CD8-positive, alpha-beta memory T cell (primary cell): ENCODE measurements at regions of chr7 and their contacts with region 1.

Region 1: GRCh38 chr7:73606801-73607691 is 17.3 kb downstream of the MLXIPL start:
- DNase-seq: peak; percentile 55 to 78 (median 65)
- H3K4me3 ChIP-seq: no peak overlapping the region
- H3K4me3 Mint-ChIP-seq: no peak overlapping the region
- H3K27ac ChIP-seq: no peak overlapping the region
- H3K27ac Mint-ChIP-seq: peak overlapping the region in 1 of 8 donors; percentile 38
- H3K4me1 ChIP-seq: no peaks in the 10 kb centered on the region
- H3K4me1 Mint-ChIP-seq: no peaks in the 10 kb centered on the region
- H3K27me3 ChIP-seq: peaks cover 8% of the 10 kb centered on the region
- H3K27me3 Mint-ChIP-seq: peaks cover 11 to 31% of the 10 kb centered on the region in 2 donors

Region 2: GRCh38 chr7:73585196-73585595 is 21.9 kb before region 1 on chr7:
- CTCF ChIA-PET with region 1: interaction called, 12 read pairs
- POLR2A ChIA-PET with region 1: no interaction called
- DNase-seq: no peak
- H3K4me3 ChIP-seq: no peak overlapping the region
- H3K4me3 Mint-ChIP-seq: no peak overlapping the region
- H3K27ac ChIP-seq: no peak overlapping the region
- H3K27ac Mint-ChIP-seq: no peak overlapping the region
- H3K4me1 ChIP-seq: no peaks in the 10 kb centered on the region
- H3K4me1 Mint-ChIP-seq: peaks cover 4 to 5% (median 5%) of the 10 kb centered on the region in 3 donors
- H3K27me3 ChIP-seq: no peaks in the 10 kb centered on the region
- H3K27me3 Mint-ChIP-seq: peaks cover 0 to 2% of the 10 kb centered on the region in 2 donors

Region 3: DNA sequence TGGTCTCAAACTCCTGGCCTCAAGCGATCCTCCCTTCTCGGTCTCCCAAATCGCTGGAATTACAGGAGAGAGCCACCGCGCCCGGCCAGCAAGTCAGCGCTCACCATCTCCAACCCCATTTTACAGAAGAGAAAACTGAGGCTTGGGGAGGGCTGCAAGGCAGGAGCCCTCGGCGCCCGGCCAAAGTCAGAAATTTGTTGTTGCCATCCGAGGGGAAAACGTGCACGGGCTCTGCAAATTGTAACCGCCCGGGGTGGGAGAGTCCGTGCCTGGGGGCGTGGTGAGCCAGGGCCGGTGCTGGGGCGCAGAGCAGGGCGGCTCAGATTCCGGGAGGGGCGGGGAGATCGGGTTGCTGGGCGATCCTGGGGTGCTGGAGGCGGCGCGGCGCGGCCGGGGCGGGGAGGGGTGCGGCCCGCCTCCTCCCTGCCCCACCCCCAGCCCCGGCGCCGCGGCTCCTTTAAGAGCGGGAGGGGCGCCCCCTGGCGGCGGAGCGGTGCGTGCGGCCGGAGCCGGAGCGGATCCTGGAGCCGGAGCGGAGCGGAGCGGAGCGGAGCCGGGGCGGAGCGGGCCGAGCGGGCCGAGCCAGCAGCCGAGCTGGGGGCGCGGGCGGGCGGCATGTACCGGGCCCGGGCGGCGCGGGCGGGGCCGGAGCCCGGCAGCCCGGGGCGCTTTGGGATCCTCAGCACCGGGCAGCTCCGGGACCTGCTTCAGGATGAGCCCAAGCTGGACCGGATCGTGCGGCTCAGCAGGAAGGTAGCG is 60.5 kb after region 1 on chr7 and contains the start of gene VPS37D:
- CTCF ChIA-PET with region 1: interaction called, 11 read pairs
- POLR2A ChIA-PET with region 1: no interaction called
- DNase-seq: peak; percentile 88 to 95 (median 91)
- H3K4me3 ChIP-seq: peak within 1 kb of the TSS; percentile 34
- H3K4me3 Mint-ChIP-seq: peak within 1 kb of the TSS; percentile 70 to 87 (median 78)
- H3K27ac ChIP-seq: peak within 1 kb of the TSS; percentile 18
- H3K27ac Mint-ChIP-seq: peak within 1 kb of the TSS in 6 of 8 donors; percentile 13 to 76 (median 47)
- H3K4me1 ChIP-seq: peaks cover 7% of the 10 kb centered on the region
- H3K4me1 Mint-ChIP-seq: peaks cover 6 to 12% (median 7%) of the 10 kb centered on the region in 3 donors
- H3K27me3 ChIP-seq: peaks cover 4% of the 10 kb centered on the region
- H3K27me3 Mint-ChIP-seq: peaks cover 18 to 30% of the 10 kb centered on the region in 2 donors
- total RNA-seq, gene VPS37D: 0.18 TPM in 1 of 2 experiments, not detected in the other

Region 4: DNA sequence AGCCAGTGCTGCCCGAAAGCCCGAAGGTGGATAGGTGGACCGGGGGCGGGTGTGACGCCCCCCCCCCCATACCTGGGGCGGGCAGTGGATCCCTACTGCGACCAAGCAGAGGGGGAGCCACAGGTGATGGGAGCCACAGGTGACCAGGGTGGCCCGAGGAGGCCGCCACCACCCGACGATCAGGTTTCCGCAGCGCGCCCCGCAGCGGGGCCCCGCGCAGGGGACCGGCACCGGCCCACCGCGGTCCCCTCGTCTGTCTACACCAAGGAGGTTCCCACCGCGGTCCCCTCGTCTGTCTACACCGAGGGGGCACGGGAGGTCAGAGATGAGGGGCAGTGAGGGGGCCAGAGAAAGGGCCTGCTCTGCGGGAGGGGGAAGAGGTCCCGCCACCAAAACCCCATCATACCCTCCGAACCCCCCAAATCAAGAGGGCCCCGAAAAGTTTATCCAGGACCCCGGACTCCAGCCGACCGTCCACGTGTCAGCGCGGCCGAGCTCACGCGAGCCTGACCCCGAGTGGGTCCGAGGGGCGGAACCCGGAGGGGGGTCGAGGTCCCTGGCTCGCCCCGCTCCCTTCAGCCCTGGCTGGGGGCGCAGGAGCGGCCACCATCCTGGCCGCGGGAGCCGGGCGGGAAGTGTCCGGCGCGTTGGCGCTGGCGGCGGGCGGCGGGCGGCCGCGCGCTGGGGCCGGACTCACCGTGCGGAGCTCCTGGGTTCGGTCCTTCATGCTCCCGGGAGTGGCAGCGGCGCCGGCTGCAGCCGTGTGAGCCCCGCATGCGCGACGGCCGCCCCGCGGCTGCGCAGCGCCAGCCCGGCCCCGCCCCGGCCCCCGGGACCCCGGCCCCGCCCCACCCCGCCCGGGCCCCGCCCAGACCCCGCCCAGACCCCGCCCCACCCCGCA is 112.1 kb after region 1 on chr7 and contains the start of gene STX1A:
- CTCF ChIA-PET with region 1: interaction called, 81 read pairs
- POLR2A ChIA-PET with region 1: interaction called, 4 read pairs
- DNase-seq: peak; percentile 64 to 75 (median 70)
- H3K4me3 ChIP-seq: peak within 1 kb of the TSS; percentile 66
- H3K4me3 Mint-ChIP-seq: peak within 1 kb of the TSS; percentile 80 to 92 (median 85)
- H3K27ac ChIP-seq: peak within 1 kb of the TSS; percentile 31
- H3K27ac Mint-ChIP-seq: peak within 1 kb of the TSS in 5 of 8 donors; percentile 43 to 97 (median 54)
- H3K4me1 ChIP-seq: peaks cover 18% of the 10 kb centered on the region
- H3K4me1 Mint-ChIP-seq: peaks cover 15 to 30% (median 18%) of the 10 kb centered on the region in 3 donors
- H3K27me3 ChIP-seq: no peaks in the 10 kb centered on the region
- H3K27me3 Mint-ChIP-seq: peaks cover 0 to 3% of the 10 kb centered on the region in 2 donors
- total RNA-seq, gene STX1A: 18.4 to 18.8 TPM

Region 5: GRCh38 chr7:73726083-73726466 is 119.0 kb after region 1 on chr7:
- CTCF ChIA-PET with region 1: interaction called, 81 read pairs
- POLR2A ChIA-PET with region 1: no interaction called
- DNase-seq: no peak
- H3K4me3 ChIP-seq: no peak overlapping the region
- H3K4me3 Mint-ChIP-seq: no peak overlapping the region
- H3K27ac ChIP-seq: no peak overlapping the region
- H3K27ac Mint-ChIP-seq: no peak overlapping the region
- H3K4me1 ChIP-seq: no peaks in the 10 kb centered on the region
- H3K4me1 Mint-ChIP-seq: no peaks in the 10 kb centered on the region
- H3K27me3 ChIP-seq: peaks cover 6% of the 10 kb centered on the region
- H3K27me3 Mint-ChIP-seq: peaks cover 4 to 12% of the 10 kb centered on the region in 2 donors

Region 6: DNA sequence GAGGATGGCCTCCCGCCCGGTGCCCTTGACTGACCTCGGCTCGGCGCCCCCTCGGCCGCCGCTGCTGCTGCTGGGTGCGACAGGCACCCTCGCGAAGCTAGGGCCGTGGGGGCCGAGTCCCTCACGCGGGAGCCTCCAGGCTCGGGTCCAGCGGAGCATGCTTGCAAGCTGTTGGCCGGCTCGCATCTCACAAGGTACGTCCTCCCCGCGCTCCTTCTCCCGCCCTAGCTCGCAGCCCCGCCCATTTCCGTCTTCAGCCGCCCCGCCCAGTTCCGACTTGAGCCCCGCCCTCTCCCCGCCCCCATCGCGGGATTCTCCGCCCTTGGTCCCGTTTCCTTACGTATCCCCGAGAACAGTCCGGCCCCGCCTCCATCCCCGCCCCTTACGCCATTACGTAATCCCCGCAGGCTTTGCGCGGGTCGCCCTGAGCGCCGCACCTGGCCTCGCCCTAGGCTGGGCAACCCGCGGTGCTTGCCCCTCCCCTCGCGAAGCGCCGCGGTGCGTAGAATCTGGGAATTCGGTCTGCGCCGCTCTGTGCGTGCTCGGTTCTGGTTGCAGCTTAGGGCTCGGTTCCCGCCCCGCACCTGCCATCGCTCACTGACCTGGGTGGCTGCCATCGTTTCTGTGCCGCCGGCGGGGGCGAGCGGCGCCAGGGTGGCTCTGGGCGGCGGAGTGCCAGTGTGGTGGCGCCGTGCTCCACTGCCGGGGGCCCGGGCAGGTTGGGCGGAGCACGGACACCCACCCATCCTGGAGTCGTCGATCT is 131.7 kb after region 1 on chr7 and contains the start of gene ABHD11:
- CTCF ChIA-PET with region 1: interaction called, 104 read pairs
- POLR2A ChIA-PET with region 1: no interaction called
- DNase-seq: peak; percentile 97 to 98 (median 97)
- H3K4me3 ChIP-seq: peak within 1 kb of the TSS; percentile 83
- H3K4me3 Mint-ChIP-seq: peak within 1 kb of the TSS; percentile 87 to 97 (median 92)
- H3K27ac ChIP-seq: peak within 1 kb of the TSS; percentile 87
- H3K27ac Mint-ChIP-seq: peak within 1 kb of the TSS; percentile 82 to 97 (median 92)
- H3K4me1 ChIP-seq: peaks cover 9% of the 10 kb centered on the region
- H3K4me1 Mint-ChIP-seq: peaks cover 11 to 24% (median 16%) of the 10 kb centered on the region in 3 donors
- H3K27me3 ChIP-seq: no peaks in the 10 kb centered on the region
- H3K27me3 Mint-ChIP-seq: peaks cover 0 to 2% of the 10 kb centered on the region in 2 donors
- total RNA-seq, gene ABHD11: 23.2 to 26.5 TPM